ENCODE measurements at regions of chr12 and their contacts with region 1.

Region 1: GRCh38 chr12:122526683-122527477 is at the starts of genes KNTC1 and RSRC2:
- DNase-seq: peak; percentile 100
- ATAC-seq: peak; percentile 92
- H3K4me3 ChIP-seq: peak within 1 kb of the TSS; percentile 95
- H3K27ac ChIP-seq: peak within 1 kb of the TSS; percentile 86
- H3K4me1 ChIP-seq: peaks cover 26% of the 10 kb centered on the region
- H3K27me3 ChIP-seq: no peaks in the 10 kb centered on the region
- CTCF ChIP-seq: no peak
- total RNA-seq, gene KNTC1: 80.3 and 84.8 TPM in 2 replicates
- total RNA-seq, gene RSRC2: 87.3 and 105 TPM in 2 replicates

Region 2: GRCh38 chr12:121712461-121713256 is 814.2 kb before region 1 on chr12 and contains the start of gene TMEM120B:
- CTCF ChIA-PET with region 1: no interaction called
- POLR2A ChIA-PET with region 1: interaction called, 10 read pairs
- intact Hi-C with region 1: no loop called
- DNase-seq: peak; percentile 87
- ATAC-seq: peak; percentile 75
- H3K4me3 ChIP-seq: peak within 1 kb of the TSS; percentile 80
- H3K27ac ChIP-seq: peak within 1 kb of the TSS; percentile 43
- H3K4me1 ChIP-seq: peaks cover 25% of the 10 kb centered on the region; the same call in 1 of the 2 replicates
- H3K27me3 ChIP-seq: no peaks in the 10 kb centered on the region
- CTCF ChIP-seq: 0 out of 2 replicates have a peak, but pooled peaks have one; percentile 13
- total RNA-seq, gene TMEM120B: 18.5 and 25.4 TPM in 2 replicates

Region 3: DNA sequence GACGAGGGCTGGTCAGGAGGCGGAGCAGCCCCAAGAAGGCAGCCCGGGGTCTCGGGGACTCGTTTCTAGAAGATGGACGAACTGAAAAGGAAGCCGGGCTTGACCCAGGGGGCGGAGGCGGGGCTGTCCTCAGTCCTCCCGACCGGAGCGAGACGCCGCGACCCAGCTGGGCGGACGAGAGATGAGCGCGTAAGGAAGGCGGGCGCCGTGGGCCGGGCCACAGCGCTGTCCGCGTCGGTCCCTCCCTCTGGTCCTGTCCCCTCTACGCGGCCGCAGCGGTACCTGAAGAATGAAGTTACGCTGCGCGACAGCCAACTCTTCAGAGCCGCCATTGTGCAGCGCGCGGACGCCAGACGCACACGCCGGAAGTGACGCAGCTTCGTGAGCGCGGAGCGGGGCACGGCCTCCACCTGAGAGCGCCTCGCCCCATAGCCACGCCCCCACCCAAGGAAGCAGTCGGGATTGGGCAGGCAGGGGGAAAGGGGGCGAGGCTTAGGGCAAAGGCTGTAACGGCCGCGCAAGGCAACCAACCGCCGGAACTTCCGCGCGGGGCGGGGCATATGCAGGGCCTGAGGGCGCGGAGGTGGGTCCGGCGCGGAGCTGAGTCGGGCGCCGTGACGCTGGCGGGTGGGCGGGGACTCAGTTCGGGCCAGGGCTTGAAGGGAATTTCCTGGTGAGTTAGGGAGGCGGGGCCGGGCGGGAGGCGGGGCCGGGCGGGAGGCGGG is 301.0 kb before region 1 on chr12 and contains the start of gene DIABLO:
- CTCF ChIA-PET with region 1: no interaction called
- POLR2A ChIA-PET with region 1: no interaction called
- intact Hi-C with region 1: loop called (anchors 1 kb)
- DNase-seq: peak; percentile 99
- ATAC-seq: peak; percentile 93
- H3K4me3 ChIP-seq: peak within 1 kb of the TSS; percentile 96
- H3K27ac ChIP-seq: peak within 1 kb of the TSS; percentile 82
- H3K4me1 ChIP-seq: peaks cover 18% of the 10 kb centered on the region
- H3K27me3 ChIP-seq: no peaks in the 10 kb centered on the region
- CTCF ChIP-seq: no peak
- total RNA-seq, gene DIABLO: 97.6 and 112 TPM in 2 replicates

Region 4: GRCh38 chr12:122244565-122245371 is 282.1 kb before region 1 on chr12:
- CTCF ChIA-PET with region 1: no interaction called
- POLR2A ChIA-PET with region 1: no interaction called
- intact Hi-C with region 1: no loop called
- DNase-seq: no peak
- ATAC-seq: no peak
- H3K4me3 ChIP-seq: no peak overlapping the region
- H3K27ac ChIP-seq: no peak overlapping the region
- H3K4me1 ChIP-seq: no peaks in the 10 kb centered on the region
- H3K27me3 ChIP-seq: no peaks in the 10 kb centered on the region
- CTCF ChIP-seq: no peak

Region 5: DNA sequence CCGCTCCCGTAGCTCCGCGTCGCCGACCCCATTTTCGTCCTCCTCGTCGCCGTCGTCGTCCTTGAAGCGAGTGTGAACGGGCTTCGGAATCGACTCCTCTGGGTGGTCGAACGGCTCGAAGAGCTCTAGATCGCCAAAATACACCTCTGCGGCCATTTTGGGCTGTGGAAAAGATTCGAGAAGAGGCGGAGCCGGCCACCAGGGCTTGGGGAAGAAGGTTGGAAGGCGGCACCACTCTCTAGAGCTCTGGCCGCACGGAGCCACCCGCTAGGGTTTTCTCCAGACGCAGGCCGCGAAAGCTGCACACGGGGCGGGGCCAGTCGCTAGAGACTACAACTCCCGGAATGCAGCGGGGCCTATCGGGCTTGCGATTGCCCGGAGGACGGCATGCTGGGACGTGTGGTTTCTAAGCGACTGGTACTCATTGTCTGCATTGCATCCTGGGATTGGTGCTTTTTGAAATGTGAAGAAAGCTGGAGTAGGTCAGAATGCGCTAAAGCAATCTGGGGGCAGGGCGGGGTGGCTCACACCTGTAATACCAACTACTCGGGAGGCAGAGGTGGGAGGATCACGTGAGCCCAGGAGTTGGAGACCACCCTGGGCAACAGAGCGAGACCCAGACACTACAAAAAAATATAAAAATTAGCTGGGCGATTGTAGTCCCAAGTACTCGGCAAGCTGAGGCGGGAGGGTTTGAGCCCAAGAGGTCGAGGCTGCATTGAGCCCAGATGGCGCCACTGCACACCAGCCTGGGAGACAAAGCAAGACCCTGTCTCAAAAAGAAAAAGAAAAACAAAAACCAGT is 26.0 kb before region 1 on chr12 and contains the start of gene ZCCHC8:
- CTCF ChIA-PET with region 1: no interaction called
- POLR2A ChIA-PET with region 1: interaction called, 11 read pairs
- intact Hi-C with region 1: loop called (anchors 1 kb)
- DNase-seq: peak; percentile 99
- ATAC-seq: peak; percentile 94
- H3K4me3 ChIP-seq: peak within 1 kb of the TSS; percentile 83
- H3K27ac ChIP-seq: peak within 1 kb of the TSS; percentile 79
- H3K4me1 ChIP-seq: peaks cover 19% of the 10 kb centered on the region
- H3K27me3 ChIP-seq: no peaks in the 10 kb centered on the region
- CTCF ChIP-seq: peak; percentile 35; the same call in 1 of the 2 replicates
- total RNA-seq, gene ZCCHC8: 14.4 and 15.0 TPM in 2 replicates

Region 6: GRCh38 chr12:122752464-122753318 is 225.8 kb after region 1 on chr12 and contains the start of gene DENR:
- CTCF ChIA-PET with region 1: no interaction called
- POLR2A ChIA-PET with region 1: no interaction called
- intact Hi-C with region 1: loop called (anchors 2 kb)
- DNase-seq: peak; percentile 100
- ATAC-seq: peak; percentile 82
- H3K4me3 ChIP-seq: peak within 1 kb of the TSS; percentile 81
- H3K27ac ChIP-seq: peak within 1 kb of the TSS; percentile 54
- H3K4me1 ChIP-seq: peaks cover 30% of the 10 kb centered on the region
- H3K27me3 ChIP-seq: no peaks in the 10 kb centered on the region
- CTCF ChIP-seq: peak; percentile 95
- total RNA-seq, gene DENR: 83.3 and 91.9 TPM in 2 replicates